Activated CD8-positive, alpha-beta T cell treated with anti-CD3 and anti-CD28 coated beads, Interleukin-2, amount 10 ng/mL, durations not matched to agents 7 days and 5 days (primary cell): ENCODE measurements at regions of chr16 and their contacts with region 1.

Region 1: GRCh38 chr16:30429678-30430427 is at the start of gene DCTPP1:
- DNase-seq: peak; percentile 99
- ATAC-seq: peak; percentile 99
- H3K4me3 Mint-ChIP-seq: no peak within 1 kb of the TSS
- H3K27ac Mint-ChIP-seq: no peak within 1 kb of the TSS
- H3K4me1 Mint-ChIP-seq: peaks cover 40% of the 10 kb centered on the region
- H3K27me3 Mint-ChIP-seq: no peaks in the 10 kb centered on the region
- total RNA-seq, gene DCTPP1: 87.3 to 92.8 TPM

Region 2: DNA sequence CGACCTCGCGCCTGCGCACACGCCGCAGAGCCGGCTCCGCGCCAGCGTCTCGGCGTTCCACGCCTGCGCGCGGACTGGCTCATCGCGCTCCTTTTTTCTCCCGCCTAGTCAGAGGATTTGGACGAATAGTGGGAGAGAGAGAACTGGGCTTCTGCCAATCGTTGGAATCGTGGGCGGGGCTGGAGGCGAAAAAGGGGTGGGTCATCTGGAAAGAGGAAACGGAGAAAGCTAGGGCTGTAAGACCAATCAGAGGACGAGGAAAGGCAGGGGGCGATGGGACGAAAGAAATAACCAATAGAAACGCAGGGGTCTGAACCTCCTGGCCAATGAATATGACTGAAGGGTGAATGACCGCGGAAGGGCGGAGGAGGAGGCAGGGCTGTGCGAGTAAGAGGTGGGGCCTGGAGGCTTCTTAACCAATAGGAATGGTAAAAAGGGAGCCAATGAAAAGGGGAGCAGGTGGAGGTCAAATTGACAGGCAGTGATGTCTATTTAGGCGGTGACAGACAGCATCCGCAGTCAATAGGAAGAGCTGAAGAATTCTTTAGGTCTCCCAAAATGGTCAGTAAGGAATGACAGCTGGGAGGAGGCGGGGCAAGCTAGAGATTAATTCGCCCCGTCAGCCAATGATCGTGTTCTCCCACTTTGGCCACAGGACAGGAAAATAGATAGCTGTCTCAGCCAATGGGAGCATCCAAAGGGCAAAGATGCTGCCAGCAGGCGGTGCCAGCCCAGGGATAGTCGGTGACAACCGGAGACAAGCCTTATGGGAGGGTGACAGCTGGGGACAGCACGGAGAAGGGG is 59.2 kb before region 1 on chr16 and contains the start of gene TBC1D10B:
- CTCF ChIA-PET with region 1: interaction called, 11 read pairs
- POLR2A ChIA-PET with region 1: no interaction called
- DNase-seq: peak; percentile 100
- ATAC-seq: peak; percentile 87
- H3K4me3 Mint-ChIP-seq: peak within 1 kb of the TSS; percentile 95
- H3K27ac Mint-ChIP-seq: peak within 1 kb of the TSS; percentile 92
- H3K4me1 Mint-ChIP-seq: peaks cover 45% of the 10 kb centered on the region
- H3K27me3 Mint-ChIP-seq: no peaks in the 10 kb centered on the region
- total RNA-seq, gene TBC1D10B: 75.4 to 75.7 TPM

Region 3: GRCh38 chr16:30445408-30446202 is 15.8 kb after region 1 on chr16 and contains the start of gene SEPHS2:
- CTCF ChIA-PET with region 1: interaction called, 31 read pairs
- POLR2A ChIA-PET with region 1: interaction called, 11 read pairs
- DNase-seq: peak; percentile 98
- ATAC-seq: peak; percentile 97
- H3K4me3 Mint-ChIP-seq: peak within 1 kb of the TSS; percentile 90
- H3K27ac Mint-ChIP-seq: peak within 1 kb of the TSS; percentile 94
- H3K4me1 Mint-ChIP-seq: peaks cover 52% of the 10 kb centered on the region
- H3K27me3 Mint-ChIP-seq: no peaks in the 10 kb centered on the region
- total RNA-seq, gene SEPHS2: 64.6 to 68.7 TPM

Region 4: DNA sequence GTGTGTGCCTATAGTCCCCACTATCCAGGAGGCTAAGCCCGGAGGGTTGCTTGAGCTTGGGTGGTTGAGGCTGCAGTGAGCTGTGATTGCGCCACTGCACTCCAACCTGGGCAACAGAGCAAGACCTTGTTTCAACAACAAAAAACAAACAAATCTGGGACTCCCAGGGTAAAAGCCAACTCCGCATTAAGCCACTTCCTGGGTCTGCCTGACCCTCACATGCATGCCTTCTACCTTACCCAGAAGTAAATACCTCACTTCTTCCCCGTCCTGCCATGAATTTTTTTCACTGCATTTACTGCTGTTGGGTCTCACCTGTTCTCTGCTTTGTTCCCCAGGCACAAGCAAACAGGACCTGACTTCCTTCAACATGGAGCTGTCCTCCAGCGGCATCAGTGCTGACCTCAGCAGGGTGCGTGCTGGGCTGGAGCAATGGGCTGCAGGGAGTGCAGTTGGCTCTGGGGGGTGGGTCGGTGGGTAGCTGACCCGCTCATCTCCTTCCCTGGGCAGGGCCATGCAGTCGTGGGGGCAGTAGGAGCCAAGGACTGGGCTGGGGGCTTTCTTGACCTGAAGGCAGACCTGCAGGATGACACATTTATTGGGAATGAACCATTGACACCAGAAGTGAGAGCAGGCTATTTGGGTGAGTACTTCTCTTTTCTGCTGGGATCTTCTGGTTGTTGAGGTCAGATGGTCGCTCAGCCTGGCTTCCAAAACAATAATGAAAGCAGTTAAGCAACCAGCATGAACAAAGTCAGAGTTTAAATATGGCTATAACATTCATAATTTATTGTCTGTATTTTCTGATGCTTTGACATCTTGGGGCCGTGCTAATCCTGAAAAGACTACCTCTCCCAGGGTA is 59.1 kb after region 1 on chr16:
- CTCF ChIA-PET with region 1: interaction called, 15 read pairs
- POLR2A ChIA-PET with region 1: interaction called, 3 read pairs
- DNase-seq: no peak
- ATAC-seq: no peak
- H3K4me3 Mint-ChIP-seq: no peak overlapping the region
- H3K27ac Mint-ChIP-seq: peak overlapping the region; percentile 60
- H3K4me1 Mint-ChIP-seq: peaks cover 57% of the 10 kb centered on the region
- H3K27me3 Mint-ChIP-seq: no peaks in the 10 kb centered on the region

Region 5: DNA sequence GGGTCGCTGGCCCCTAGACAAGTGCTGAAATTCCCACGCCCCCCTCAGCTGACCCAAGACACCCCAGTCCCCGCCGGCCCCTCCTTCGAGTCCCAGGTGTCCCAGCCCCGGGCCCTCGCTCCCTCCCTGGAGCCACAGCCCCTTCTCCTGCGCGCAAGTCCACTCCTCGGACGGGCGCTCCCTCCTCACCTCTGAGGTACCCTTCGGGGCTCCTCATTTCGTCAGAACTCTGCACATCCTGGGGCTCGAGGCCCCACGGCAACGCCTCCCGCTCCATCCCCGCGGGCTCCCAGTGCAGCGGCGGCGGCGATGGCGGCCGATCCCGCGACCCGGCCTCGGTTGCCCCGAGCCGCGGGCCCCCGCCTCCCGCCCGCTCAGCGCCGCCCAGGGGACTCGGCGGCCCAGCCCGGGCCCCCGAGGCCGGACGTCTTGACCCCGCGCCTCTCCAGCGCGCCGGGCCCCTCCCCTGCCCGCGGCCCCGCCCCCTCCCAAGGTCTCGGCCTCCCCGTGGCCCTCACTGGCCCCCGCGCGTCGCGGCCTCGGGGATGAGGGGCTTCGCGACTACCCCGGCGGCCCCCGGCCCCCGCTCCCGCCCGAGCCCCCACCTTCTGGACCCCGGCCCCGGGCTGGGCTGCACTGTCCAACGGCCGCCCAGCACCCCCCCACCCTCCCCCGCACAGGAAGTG is 96.4 kb after region 1 on chr16 and contains the start of gene ZNF768:
- CTCF ChIA-PET with region 1: interaction called, 11 read pairs
- POLR2A ChIA-PET with region 1: interaction called, 3 read pairs
- DNase-seq: peak; percentile 34
- ATAC-seq: peak; percentile 31
- H3K4me3 Mint-ChIP-seq: peak within 1 kb of the TSS; percentile 78
- H3K27ac Mint-ChIP-seq: peak within 1 kb of the TSS; percentile 75
- H3K4me1 Mint-ChIP-seq: peaks cover 32% of the 10 kb centered on the region
- H3K27me3 Mint-ChIP-seq: no peaks in the 10 kb centered on the region
- total RNA-seq, gene ZNF768: 6.7 to 7.0 TPM

Region 6: GRCh38 chr16:30602616-30603277 is 172.9 kb after region 1 on chr16:
- CTCF ChIA-PET with region 1: interaction called, 19 read pairs
- POLR2A ChIA-PET with region 1: no interaction called
- DNase-seq: no peak
- ATAC-seq: no peak
- H3K4me3 Mint-ChIP-seq: no peak overlapping the region
- H3K27ac Mint-ChIP-seq: no peak overlapping the region
- H3K4me1 Mint-ChIP-seq: peaks cover 17% of the 10 kb centered on the region
- H3K27me3 Mint-ChIP-seq: no peaks in the 10 kb centered on the region

Region 7: DNA sequence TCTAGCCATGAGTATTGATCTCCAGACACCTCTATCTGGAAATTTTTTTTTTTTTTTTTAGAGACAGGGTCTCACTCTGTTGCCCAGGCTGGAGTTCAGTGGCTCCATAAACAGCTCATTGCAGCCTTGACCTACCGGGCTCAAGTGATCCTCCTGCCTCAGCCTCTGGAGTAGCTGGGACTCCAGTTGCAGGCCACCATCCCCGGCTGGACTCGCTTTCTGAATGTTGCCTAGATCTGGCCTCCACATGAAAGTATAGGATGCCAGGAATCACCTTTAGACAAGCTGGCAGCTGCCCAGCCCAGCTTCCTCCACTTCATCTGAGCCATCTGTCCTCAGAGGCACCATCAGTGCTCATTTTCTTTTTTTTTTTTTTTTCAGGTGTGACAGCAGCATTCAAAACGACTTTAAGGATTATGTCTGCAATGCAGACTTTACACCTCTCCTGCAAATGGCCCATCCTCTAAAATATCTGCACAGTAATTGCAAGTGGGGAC is 214.5 kb after region 1 on chr16:
- CTCF ChIA-PET with region 1: no interaction called
- POLR2A ChIA-PET with region 1: no interaction called
- DNase-seq: no peak
- ATAC-seq: no peak
- H3K4me3 Mint-ChIP-seq: no peak overlapping the region
- H3K27ac Mint-ChIP-seq: no peak overlapping the region
- H3K4me1 Mint-ChIP-seq: peaks cover 14% of the 10 kb centered on the region
- H3K27me3 Mint-ChIP-seq: peaks cover 5% of the 10 kb centered on the region

Region 8: DNA sequence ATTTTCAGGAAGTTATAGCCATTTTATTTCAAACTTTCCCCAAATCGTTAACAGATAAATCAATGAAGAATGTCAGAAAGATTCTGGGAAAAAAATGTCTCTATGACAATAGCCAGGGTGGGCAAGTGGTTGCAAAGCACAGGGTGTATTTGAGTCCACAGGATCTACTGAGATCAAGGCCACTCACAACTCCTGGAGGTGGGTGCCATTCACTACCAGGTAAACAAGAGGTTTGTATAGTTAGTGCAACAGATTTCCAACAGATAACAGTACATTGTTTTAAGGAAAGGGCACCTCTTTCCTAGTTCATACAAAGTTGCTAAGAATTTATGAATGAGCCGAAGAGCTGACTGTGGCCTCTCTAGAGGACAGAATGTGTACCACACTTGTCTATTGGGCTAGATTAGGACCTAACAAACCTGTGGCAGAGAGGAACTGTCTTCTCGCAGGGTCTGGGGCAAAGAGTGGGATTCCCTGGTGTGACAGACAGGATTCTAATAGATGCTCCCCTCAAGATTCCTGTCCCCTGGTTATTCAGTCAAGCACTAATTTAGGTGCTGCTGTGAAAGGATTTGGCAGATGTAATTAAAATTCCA is 409.1 kb after region 1 on chr16:
- CTCF ChIA-PET with region 1: no interaction called
- POLR2A ChIA-PET with region 1: no interaction called
- DNase-seq: no peak
- ATAC-seq: no peak
- H3K4me3 Mint-ChIP-seq: no peak overlapping the region
- H3K27ac Mint-ChIP-seq: no peak overlapping the region
- H3K4me1 Mint-ChIP-seq: no peaks in the 10 kb centered on the region
- H3K27me3 Mint-ChIP-seq: no peaks in the 10 kb centered on the region